ENCODE measurements at regions of chr5 and their contacts with region 1.

Region 1: DNA sequence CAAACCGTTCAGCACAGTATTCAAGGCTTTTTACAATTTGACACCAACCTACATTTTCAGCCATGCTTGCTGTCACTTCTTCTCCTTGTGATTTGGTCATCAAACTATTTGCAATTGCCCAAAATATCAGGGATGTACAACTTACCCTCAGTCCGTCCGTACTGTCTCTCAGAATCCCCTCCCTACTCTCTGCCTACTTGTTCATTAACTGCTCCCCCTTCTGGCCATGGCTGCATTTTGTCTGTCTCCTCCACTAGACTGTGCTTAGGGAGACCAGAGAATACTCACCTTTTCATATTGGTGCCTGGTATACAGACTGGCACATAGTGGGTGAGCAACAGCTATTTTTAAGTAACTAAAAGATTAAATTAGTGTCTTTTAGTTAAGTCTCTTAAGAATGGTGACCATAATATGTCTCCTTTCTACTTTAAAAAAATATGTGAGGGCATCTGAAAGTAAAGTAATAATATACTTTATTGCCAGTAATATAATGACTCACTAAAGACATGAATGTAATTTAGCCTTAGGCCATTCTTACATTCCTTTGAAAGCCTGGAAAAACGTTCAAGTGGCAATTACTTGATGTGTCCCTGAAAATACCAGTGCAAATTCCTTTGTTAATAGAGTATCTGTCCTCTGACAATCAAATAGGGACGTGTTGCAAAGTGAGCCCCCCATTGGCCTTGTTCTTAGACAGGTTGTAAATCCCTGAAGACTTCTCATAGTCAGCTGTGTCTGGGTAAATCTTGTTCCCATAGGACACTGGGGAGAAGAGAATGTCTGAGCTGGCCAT is 27.8 kb downstream of the PRLR start:
- DNase-seq: no peak
- H3K4me3 ChIP-seq: no peak overlapping the region
- H3K27ac ChIP-seq: no peak overlapping the region
- H3K4me1 ChIP-seq: no peaks in the 10 kb centered on the region
- H3K27me3 ChIP-seq: no peaks in the 10 kb centered on the region
- CTCF ChIP-seq: peak in 2 of 4 experiments; percentile 16 to 26
- POLR2A ChIP-seq: no peak

Region 2: DNA sequence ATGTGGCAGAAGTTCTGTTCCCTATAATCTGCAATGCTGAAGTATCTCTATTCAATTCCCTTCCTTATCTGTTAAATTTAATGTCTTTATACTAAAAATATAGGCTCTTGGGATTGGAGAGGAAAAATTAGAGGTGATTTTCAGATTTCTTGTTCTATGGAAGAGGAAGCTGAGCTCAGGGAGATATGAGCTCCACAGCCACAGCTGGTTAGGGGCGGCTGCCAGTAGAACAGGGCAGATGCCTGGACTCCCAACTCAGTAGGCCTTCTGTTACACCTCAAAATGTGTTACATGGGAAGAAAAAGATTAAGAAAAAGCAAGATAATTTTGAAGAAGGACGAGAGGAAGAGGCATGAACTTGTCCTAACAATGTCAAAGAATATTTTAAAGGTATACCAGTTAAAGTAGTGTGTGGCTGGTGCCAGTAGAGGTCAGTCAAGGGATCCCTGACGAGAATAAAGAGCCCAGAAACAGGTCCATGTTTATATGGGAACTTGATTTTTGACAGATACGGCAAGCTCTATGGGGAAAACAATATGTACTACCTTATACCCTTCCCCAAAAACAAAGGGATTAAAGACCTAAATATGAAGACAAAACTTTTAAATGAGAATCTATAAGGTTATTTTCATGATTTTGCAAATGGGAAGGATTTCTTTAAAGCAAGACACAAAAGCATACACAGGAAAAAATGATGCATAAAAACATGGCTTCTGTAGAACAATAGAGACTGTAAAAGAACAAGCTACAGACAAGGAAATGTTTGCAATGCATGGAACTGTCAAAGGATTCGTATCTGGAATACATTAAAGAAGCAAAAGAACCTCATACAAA is 244.4 kb before region 1 on chr5:
- intact Hi-C with region 1: loop called (anchors 10 kb)
- DNase-seq: no peak
- H3K4me3 ChIP-seq: no peak overlapping the region
- H3K27ac ChIP-seq: no peak overlapping the region
- H3K4me1 ChIP-seq: no peaks in the 10 kb centered on the region
- H3K27me3 ChIP-seq: no peaks in the 10 kb centered on the region
- CTCF ChIP-seq: peak in 2 of 4 experiments; percentile 11 to 28
- POLR2A ChIP-seq: no peak

Region 3: GRCh38 chr5:35066260-35066795 is 136.2 kb before region 1 on chr5:
- intact Hi-C with region 1: no loop called
- DNase-seq: no peak
- H3K4me3 ChIP-seq: no peak overlapping the region
- H3K27ac ChIP-seq: no peak overlapping the region
- H3K4me1 ChIP-seq: no peaks in the 10 kb centered on the region
- H3K27me3 ChIP-seq: no peaks in the 10 kb centered on the region
- CTCF ChIP-seq: no peak
- POLR2A ChIP-seq: no peak

Region 4: GRCh38 chr5:35089334-35090314 is 112.9 kb before region 1 on chr5:
- intact Hi-C with region 1: loop called (anchors 10 kb)
- DNase-seq: peak; percentile 35
- H3K4me3 ChIP-seq: no peak overlapping the region
- H3K27ac ChIP-seq: no peak overlapping the region
- H3K4me1 ChIP-seq: no peaks in the 10 kb centered on the region
- H3K27me3 ChIP-seq: no peaks in the 10 kb centered on the region
- CTCF ChIP-seq: peak in 3 of 4 experiments; percentile 65 to 75 (median 74)
- POLR2A ChIP-seq: no peak

Measured in prostate gland (tissue), 2 donors.